ENCODE measurements at regions of chr14 and their contacts with region 1.

Region 1: DNA sequence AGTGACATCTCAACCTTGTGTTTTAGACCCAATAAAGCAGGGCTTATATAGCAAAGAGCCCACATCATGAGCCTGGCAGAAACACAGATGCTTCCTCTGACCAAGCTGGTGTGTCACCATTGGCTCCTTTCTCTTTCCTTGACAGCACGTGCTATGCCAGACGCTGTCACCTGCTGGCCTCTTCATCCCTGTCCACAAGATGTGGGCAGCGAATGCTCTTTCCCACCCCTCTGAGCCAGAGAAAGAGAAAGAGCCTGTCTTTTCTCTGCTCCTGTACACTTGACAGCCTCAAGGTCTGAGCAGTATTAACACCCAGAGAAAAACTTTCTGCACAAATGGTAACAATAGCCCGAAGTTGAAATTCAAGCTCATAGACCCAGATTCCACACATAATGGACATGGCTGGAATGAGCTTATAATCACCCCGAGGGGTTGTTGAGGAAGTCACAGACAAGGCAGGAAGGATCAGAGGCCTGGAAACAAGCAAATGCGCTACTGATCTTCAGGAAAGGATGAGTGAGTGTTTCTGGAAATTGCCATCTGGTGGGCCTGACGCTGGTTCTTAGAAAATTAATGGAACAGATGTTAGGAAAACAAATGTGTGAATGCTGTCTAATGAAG is 8.9 kb downstream of the TGFB3 start:
- DNase-seq: no peak
- ATAC-seq: no peak

Region 2: GRCh38 chr14:75837151-75837787 is 135.6 kb before region 1 on chr14:
- intact Hi-C with region 1: loop called (anchors 1 kb)
- DNase-seq: no peak
- ATAC-seq: no peak